OCI-LY7 (cell line): ENCODE measurements at regions of chr6 and their contacts with region 1.

Region 1: GRCh38 chr6:3410385-3411360 is 46.2 kb downstream of the SLC22A23 start:
- DNase-seq: peak; percentile 79
- H3K4me3 ChIP-seq: no peak overlapping the region
- H3K27ac ChIP-seq: no peak overlapping the region
- H3K4me1 ChIP-seq: no peaks in the 10 kb centered on the region
- CTCF ChIP-seq: peak; percentile 93

Region 2: GRCh38 chr6:3125815-3126214 is 284.9 kb before region 1 on chr6:
- CTCF ChIA-PET with region 1: no interaction called
- POLR2A ChIA-PET with region 1: no interaction called
- intact Hi-C with region 1: no loop called
- DNase-seq: no peak
- H3K4me3 ChIP-seq: no peak overlapping the region
- H3K27ac ChIP-seq: no peak overlapping the region
- H3K4me1 ChIP-seq: peaks cover 25% of the 10 kb centered on the region
- CTCF ChIP-seq: no peak

Region 3: GRCh38 chr6:3732345-3733141 is 321.9 kb after region 1 on chr6:
- CTCF ChIA-PET with region 1: no interaction called
- POLR2A ChIA-PET with region 1: no interaction called
- intact Hi-C with region 1: loop called (anchors 2 kb)
- DNase-seq: peak; percentile 65
- H3K4me3 ChIP-seq: no peak overlapping the region
- H3K27ac ChIP-seq: no peak overlapping the region
- H3K4me1 ChIP-seq: no peaks in the 10 kb centered on the region
- CTCF ChIP-seq: peak; percentile 92